CD8-positive, alpha-beta T cell (primary cell): ENCODE measurements at regions of chr5 and their contacts with region 1.

Region 1: DNA sequence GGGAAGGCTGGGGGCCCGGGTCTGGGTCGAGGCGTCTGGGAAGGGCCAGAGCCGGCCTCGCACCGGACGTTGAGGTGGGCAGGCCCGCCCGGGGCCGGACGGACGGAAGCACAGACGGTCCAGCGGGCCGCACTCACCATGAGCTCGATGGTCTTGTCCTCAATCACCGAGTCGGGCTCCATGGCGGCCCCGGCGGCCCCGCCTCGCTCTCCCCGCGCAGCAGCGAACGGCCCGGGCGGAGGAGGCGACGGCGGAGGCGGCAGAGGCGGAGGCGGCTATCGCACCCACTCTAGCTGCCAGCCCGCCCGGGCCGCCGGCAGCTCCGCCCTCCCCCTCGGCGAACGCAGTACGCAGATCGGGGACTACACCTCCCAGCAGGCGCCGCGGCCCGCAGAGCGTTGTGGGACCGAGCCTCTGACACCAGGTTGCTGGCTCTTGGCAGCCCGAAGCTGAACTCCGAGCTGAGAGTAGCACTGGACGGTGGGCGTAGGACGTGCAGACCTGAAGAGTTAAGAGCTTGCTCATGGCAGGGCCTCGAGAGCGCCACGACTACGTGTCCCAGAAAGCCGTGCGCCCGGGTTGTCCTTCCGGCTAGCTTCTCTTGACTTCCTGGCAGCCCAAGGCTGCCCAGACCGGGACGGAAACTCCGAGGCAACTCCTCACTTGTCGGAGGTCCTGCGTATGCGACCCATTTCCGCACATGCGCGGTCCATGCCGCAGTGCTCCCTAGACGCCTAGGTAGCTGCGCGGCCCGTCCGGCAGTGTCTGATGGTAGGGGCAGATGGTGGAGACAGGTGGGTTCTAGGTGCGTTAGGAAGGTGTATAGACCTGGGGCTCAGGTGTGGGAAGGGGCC is at the start of gene FBXW11:
- DNase-seq: peak; percentile 87 to 98 (median 94)
- ATAC-seq: peak; percentile 87
- H3K4me3 ChIP-seq: peak within 1 kb of the TSS; percentile 78 to 96
- H3K4me3 Mint-ChIP-seq: peak within 1 kb of the TSS; percentile 95
- H3K27ac ChIP-seq: peak within 1 kb of the TSS; percentile 96 to 99
- H3K27ac Mint-ChIP-seq: peak within 1 kb of the TSS; percentile 98
- H3K4me1 ChIP-seq: peaks cover 35% of the 10 kb centered on the region
- H3K4me1 Mint-ChIP-seq: peaks cover 48% of the 10 kb centered on the region
- H3K27me3 ChIP-seq: no peaks in the 10 kb centered on the region
- H3K27me3 Mint-ChIP-seq: no peaks in the 10 kb centered on the region
- CTCF ChIP-seq: no peak
- total RNA-seq, gene FBXW11: 28.8 to 32.6 TPM

Region 2: GRCh38 chr5:171913987-171914273 is 92.6 kb before region 1 on chr5:
- CTCF ChIA-PET with region 1: interaction called, 27 read pairs
- POLR2A ChIA-PET with region 1: interaction called, 13 read pairs
- intact Hi-C with region 1: loop called in 1 of 2 experiments (anchors 2 kb)
- DNase-seq: no peak
- ATAC-seq: no peak
- H3K4me3 ChIP-seq: no peak overlapping the region
- H3K4me3 Mint-ChIP-seq: no peak overlapping the region
- H3K27ac ChIP-seq: no peak overlapping the region
- H3K27ac Mint-ChIP-seq: peak overlapping the region; percentile 7
- H3K4me1 ChIP-seq: peaks cover 9% of the 10 kb centered on the region
- H3K4me1 Mint-ChIP-seq: peaks cover 45% of the 10 kb centered on the region
- H3K27me3 ChIP-seq: no peaks in the 10 kb centered on the region
- H3K27me3 Mint-ChIP-seq: no peaks in the 10 kb centered on the region
- CTCF ChIP-seq: no peak

Region 3: GRCh38 chr5:172044631-172045314 is 38.2 kb after region 1 on chr5:
- CTCF ChIA-PET with region 1: interaction called, 10 read pairs
- POLR2A ChIA-PET with region 1: interaction called, 4 read pairs
- intact Hi-C with region 1: loop called in 1 of 2 experiments (anchors 5 kb)
- DNase-seq: no peak
- ATAC-seq: no peak
- H3K4me3 ChIP-seq: no peak overlapping the region
- H3K4me3 Mint-ChIP-seq: no peak overlapping the region
- H3K27ac ChIP-seq: no peak overlapping the region
- H3K27ac Mint-ChIP-seq: peak overlapping the region; percentile 78
- H3K4me1 ChIP-seq: no peaks in the 10 kb centered on the region
- H3K4me1 Mint-ChIP-seq: peaks cover 11% of the 10 kb centered on the region
- H3K27me3 ChIP-seq: no peaks in the 10 kb centered on the region
- H3K27me3 Mint-ChIP-seq: no peaks in the 10 kb centered on the region
- CTCF ChIP-seq: no peak

Region 4: DNA sequence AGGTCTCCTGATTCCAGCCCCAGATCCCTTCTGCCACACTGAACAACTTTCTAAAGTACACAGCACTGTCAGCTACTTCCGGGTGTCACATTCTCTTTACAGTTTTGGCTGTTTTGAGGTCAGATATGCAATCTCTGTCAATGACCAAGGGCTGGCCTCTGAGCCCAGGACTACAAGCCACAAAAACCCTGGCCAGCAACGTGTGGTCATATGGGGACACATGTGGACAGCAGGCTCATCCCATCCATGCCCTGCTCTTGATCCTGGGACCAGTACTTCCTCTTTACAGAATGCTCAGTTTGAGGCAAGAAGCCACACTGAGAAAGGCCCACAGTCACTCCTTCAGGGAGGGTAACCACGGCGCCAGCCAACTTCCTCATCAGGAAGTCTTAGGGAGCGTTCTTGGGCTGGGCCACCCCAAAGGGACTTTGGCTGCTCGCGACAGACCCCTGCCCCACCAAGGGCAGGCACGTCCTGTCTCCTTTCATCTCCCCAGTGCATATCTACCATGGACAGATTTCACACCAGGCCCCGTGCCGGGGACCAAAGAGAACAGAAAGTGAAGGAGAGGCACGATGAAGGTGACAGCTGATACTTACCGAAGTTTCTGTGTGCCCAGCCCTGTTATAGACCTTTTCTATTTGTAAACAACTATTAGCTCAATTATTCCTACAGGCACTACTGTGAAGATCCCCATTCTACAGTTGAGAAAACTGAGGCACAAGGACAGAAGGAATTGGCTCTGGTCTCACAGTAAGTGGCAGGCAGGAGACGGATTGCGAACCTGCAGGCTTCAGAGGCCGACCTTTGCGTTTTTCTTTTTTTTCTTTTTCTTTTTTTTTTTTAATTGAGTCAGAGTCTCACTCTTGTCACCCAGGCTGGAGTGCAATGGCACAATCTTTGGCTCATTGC is 144.2 kb after region 1 on chr5:
- CTCF ChIA-PET with region 1: no interaction called
- POLR2A ChIA-PET with region 1: no interaction called
- intact Hi-C with region 1: no loop called
- DNase-seq: peak in 6 of 9 experiments; percentile 7 to 61 (median 36)
- ATAC-seq: peak; percentile 58
- H3K4me3 ChIP-seq: peak overlapping the region; percentile 9 to 36
- H3K4me3 Mint-ChIP-seq: peak overlapping the region; percentile 48
- H3K27ac ChIP-seq: peak overlapping the region; percentile 40 to 82
- H3K27ac Mint-ChIP-seq: peak overlapping the region; percentile 86
- H3K4me1 ChIP-seq: peaks cover 71% of the 10 kb centered on the region
- H3K4me1 Mint-ChIP-seq: peaks cover 84% of the 10 kb centered on the region
- H3K27me3 ChIP-seq: no peaks in the 10 kb centered on the region
- H3K27me3 Mint-ChIP-seq: no peaks in the 10 kb centered on the region
- CTCF ChIP-seq: no peak

Region 5: DNA sequence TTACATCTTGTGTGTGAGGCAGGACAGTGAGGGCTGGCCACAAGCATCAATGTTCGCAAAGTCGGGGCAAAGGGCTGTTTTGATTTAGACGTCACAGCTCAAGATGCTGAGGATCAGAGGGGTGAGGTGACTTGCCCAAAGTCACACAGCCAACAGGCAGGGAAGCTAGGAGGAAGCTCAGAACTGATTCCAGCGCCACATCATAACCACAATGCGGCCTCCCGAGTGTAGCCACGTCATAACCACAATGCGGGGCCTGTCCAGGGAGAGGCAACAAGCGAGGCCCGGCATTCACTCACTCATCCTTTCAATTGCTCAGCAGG is 167.2 kb after region 1 on chr5:
- CTCF ChIA-PET with region 1: no interaction called
- POLR2A ChIA-PET with region 1: interaction called, 23 read pairs
- intact Hi-C with region 1: loop called in 1 of 2 experiments (anchors 1 kb)
- DNase-seq: peak in 8 of 9 experiments; percentile 41 to 90 (median 72)
- ATAC-seq: peak; percentile 24
- H3K4me3 ChIP-seq: peak overlapping the region; percentile 57 to 69
- H3K4me3 Mint-ChIP-seq: peak overlapping the region; percentile 90
- H3K27ac ChIP-seq: peak overlapping the region; percentile 60 to 97
- H3K27ac Mint-ChIP-seq: peak overlapping the region; percentile 97
- H3K4me1 ChIP-seq: peaks cover 86% of the 10 kb centered on the region
- H3K4me1 Mint-ChIP-seq: peaks cover 92% of the 10 kb centered on the region
- H3K27me3 ChIP-seq: no peaks in the 10 kb centered on the region
- H3K27me3 Mint-ChIP-seq: no peaks in the 10 kb centered on the region
- CTCF ChIP-seq: no peak

Region 6: GRCh38 chr5:172958331-172959046 is 951.9 kb after region 1 on chr5:
- CTCF ChIA-PET with region 1: no interaction called
- POLR2A ChIA-PET with region 1: no interaction called
- intact Hi-C with region 1: loop called in 1 of 2 experiments (anchors 10 kb)
- DNase-seq: peak; percentile 23 to 79 (median 63)
- ATAC-seq: peak; percentile 65
- H3K4me3 ChIP-seq: peak overlapping the region; percentile 76 to 77
- H3K4me3 Mint-ChIP-seq: peak overlapping the region; percentile 97
- H3K27ac ChIP-seq: peak overlapping the region; percentile 65 to 87
- H3K27ac Mint-ChIP-seq: peak overlapping the region; percentile 98
- H3K4me1 ChIP-seq: peaks cover 13% of the 10 kb centered on the region
- H3K4me1 Mint-ChIP-seq: peaks cover 38% of the 10 kb centered on the region
- H3K27me3 ChIP-seq: no peaks in the 10 kb centered on the region
- H3K27me3 Mint-ChIP-seq: no peaks in the 10 kb centered on the region
- CTCF ChIP-seq: no peak

Region 7: DNA sequence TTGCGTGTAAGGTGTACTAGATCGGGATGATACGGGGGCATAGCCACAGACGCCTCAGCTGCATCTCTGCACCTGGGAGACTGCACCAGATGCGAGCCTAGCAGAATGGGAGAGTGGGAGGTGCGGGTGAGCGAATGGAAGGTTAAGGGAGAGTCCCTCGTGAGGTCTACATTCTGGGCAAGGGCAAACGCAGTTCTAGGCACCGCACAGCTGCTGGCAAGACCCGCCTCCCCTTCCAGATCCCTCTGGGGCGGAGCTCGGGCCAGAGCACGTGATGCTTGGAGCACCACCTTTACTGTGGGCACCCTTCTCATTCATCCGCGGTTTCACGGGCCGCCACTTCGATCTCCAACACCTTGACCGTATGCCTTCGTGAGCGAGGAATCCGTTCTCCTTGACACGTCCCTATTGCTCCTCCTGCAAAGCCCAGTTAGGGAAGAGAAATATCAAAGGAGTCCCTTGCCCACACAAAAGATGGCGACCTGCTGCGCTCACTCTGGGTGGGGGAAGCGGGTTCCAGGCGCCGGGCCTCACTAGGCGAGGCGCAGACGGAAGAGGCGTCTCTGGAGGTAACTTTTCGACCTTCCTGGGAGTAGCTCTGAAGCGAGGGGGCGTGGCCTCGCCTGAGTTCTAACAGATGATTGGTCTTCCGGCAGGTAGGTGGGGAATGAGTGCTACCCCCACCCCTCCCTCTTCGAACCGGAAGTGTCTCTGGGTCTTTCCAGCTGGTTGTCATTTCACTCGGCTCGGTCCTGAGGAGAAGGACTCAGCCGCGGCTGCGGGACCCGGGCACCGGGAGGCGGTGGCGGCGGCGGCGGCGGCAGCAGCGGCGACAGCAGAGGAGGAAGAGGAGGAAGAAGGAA is 1881.3 kb after region 1 on chr5 and contains the start of gene CPEB4:
- CTCF ChIA-PET with region 1: no interaction called
- POLR2A ChIA-PET with region 1: no interaction called
- intact Hi-C with region 1: loop called (anchors 5 to 10 kb)
- DNase-seq: peak; percentile 92 to 100 (median 96)
- ATAC-seq: peak; percentile 95
- H3K4me3 ChIP-seq: peak within 1 kb of the TSS; percentile 68 to 76
- H3K4me3 Mint-ChIP-seq: peak within 1 kb of the TSS; percentile 100
- H3K27ac ChIP-seq: peak within 1 kb of the TSS; percentile 42 to 97
- H3K27ac Mint-ChIP-seq: peak within 1 kb of the TSS; percentile 99
- H3K4me1 ChIP-seq: peaks cover 48% of the 10 kb centered on the region
- H3K4me1 Mint-ChIP-seq: peaks cover 78% of the 10 kb centered on the region
- H3K27me3 ChIP-seq: no peaks in the 10 kb centered on the region
- H3K27me3 Mint-ChIP-seq: no peaks in the 10 kb centered on the region
- CTCF ChIP-seq: no peak
- total RNA-seq, gene CPEB4: 21.7 to 24.3 TPM